ENCODE measurements at regions of chr5 and their contacts with region 1.

Region 1: DNA sequence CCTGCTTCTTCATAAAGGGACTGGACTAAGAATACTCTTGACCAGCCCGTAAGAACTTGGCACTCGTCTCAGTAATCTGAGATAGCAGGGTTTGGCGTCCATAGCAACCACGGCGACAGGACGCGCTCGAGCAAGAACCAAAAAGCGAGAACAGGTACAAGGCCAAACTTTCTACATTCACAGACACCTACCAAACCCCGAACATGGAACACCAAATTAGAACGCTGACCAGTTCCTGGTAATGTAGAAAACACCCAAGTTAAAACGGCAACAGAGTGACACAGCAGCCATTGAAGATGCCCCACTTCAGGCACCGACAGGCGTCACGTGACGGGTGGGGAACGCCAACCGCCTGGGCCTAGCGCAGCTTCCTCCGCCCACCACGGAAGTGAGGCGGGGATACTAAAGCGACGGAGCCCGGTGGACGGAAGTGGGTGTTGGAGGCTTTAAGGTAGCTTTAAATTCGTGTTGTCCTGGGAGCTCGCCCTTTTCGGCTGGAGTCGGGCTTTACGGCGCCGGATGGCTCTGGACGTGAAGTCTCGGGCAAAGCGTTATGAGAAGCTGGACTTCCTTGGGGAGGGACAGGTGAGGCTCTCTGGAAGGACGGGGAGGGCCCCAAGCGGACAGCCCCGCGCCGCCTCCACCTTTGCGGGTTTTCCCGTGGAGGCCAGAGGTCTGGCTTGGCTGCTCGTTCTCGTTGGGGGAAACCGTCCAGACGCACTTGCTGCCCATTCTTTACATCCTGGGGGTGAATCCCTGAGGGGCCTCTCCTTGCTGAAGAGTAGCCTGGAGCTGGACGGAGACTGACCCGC is at the start of gene CDK7:
- DNase-seq: peak; percentile 95
- H3K4me3 Mint-ChIP-seq: peak within 1 kb of the TSS; percentile 98
- H3K27ac Mint-ChIP-seq: peak within 1 kb of the TSS; percentile 77
- H3K4me1 Mint-ChIP-seq: peaks cover 39% of the 10 kb centered on the region
- H3K27me3 Mint-ChIP-seq: no peaks in the 10 kb centered on the region
- total RNA-seq, gene CDK7: 26.0 to 30.5 TPM

Region 2: GRCh38 chr5:69166686-69167492 is 67.8 kb before region 1 on chr5 and contains the start of gene CCNB1:
- CTCF ChIA-PET with region 1: no interaction called
- POLR2A ChIA-PET with region 1: interaction called, 24 read pairs
- DNase-seq: peak; percentile 99
- H3K4me3 Mint-ChIP-seq: peak within 1 kb of the TSS; percentile 94
- H3K27ac Mint-ChIP-seq: peak within 1 kb of the TSS; percentile 85
- H3K4me1 Mint-ChIP-seq: peaks cover 50% of the 10 kb centered on the region
- H3K27me3 Mint-ChIP-seq: no peaks in the 10 kb centered on the region
- total RNA-seq, gene CCNB1: 162 to 175 TPM

Region 3: DNA sequence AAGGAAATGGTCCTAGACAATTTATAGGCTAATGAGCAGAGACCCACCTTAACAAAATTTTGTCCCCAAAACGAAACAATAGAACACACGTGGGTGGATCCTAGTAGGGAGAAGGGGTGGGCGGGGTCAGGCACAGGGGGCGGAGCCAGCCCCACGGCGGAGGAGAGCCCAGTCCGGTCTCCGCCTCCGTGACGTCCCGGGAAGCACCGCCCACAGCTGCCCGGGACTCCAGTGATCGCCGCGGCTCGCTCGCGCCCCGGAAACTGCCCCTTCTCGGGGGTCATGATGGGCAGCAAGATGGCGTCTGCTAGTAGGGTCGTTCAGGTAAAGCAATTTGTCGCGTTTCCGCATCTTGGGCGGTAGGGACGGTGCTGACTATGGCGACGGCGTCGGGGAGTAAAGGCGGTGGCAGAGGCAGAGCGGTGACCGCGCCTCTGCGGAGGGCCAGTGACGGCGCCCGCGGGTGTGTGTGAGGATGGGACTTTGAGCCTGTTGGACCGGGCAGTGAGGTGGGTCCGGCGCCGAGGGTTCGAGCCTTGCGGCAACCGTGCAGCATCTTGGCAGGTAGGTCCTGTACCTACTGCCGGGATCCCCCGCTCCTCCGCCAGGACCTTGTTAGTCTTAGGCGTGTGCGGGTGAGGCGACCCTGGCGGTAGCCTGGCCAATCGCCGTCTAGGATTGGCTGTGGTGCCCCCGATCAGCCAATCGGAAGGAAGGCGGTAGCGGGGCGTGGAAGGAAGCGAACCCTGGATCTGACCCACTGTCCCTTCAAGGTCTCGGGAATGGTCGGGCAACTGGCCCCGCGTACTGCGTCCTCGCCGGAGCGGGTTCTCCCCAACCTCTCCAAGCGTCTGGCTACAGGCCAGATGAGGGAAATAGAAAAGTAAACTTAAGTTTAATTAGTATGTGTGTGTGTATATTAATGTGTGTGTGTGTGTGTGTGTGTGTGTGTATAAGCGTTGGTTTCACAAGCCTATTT is 16.8 kb before region 1 on chr5:
- CTCF ChIA-PET with region 1: interaction called, 4 read pairs
- POLR2A ChIA-PET with region 1: interaction called, 15 read pairs
- DNase-seq: peak; percentile 94
- H3K4me3 Mint-ChIP-seq: peak overlapping the region; percentile 93
- H3K27ac Mint-ChIP-seq: peak overlapping the region; percentile 90
- H3K4me1 Mint-ChIP-seq: peaks cover 24% of the 10 kb centered on the region
- H3K27me3 Mint-ChIP-seq: no peaks in the 10 kb centered on the region

Measured in activated CD4-positive, alpha-beta memory T cell treated with anti-CD3 and anti-CD28 coated beads, Interleukin-2, amount 10 ng/mL, durations not matched to agents 7 days and 5 days (primary cell).